HCT116 (cell line): ENCODE measurements at regions of chr18 and their contacts with region 1.

Region 1: DNA sequence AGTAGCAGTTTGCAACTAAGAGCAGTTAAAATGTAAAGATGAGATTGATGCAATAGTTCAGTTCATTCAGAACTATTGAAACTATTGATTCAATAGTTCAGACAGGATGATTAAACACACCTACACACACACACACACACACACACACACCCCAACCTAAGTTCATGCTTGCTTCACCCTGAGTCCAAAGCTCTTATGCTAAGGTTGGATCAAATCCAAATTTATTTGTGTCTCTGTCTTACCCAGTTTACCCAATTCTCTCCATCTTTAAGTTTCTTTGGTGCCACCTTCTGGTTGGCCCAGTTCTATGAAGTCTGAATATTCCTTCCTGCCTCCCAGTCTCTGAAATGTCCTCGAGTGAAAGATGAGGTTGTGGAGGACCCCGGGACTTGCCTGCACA is 5.1 kb downstream of the SERPINB8 start:
- DNase-seq: peak; percentile 21
- ATAC-seq: no peak
- H3K4me3 ChIP-seq: no peak overlapping the region
- H3K27ac ChIP-seq: no peak overlapping the region
- H3K4me1 ChIP-seq: peaks cover 6 to 15% of the 10 kb centered on the region in 2 experiments; a peak in 3 of 4 replicates
- H3K27me3 ChIP-seq: no peaks in the 10 kb centered on the region
- CTCF ChIP-seq: peak in 2 of 3 experiments; percentile 39 to 47; a peak in 4 of 6 replicates
- POLR2A ChIP-seq: no peak
- RAD21 ChIP-seq: peak; percentile 43

Region 2: GRCh38 chr18:63963615-63964256 is 11.3 kb before region 1 on chr18:
- CTCF ChIA-PET with region 1: interaction called, 10 read pairs
- POLR2A ChIA-PET with region 1: interaction called, 5 read pairs
- RAD21 ChIA-PET with region 1: no interaction called
- intact Hi-C with region 1: no loop called
- DNase-seq: peak; percentile 56
- ATAC-seq: peak; percentile 90
- H3K4me3 ChIP-seq: no peak overlapping the region
- H3K27ac ChIP-seq: no peak overlapping the region
- H3K4me1 ChIP-seq: no peaks in the 10 kb centered on the region
- H3K27me3 ChIP-seq: no peaks in the 10 kb centered on the region
- CTCF ChIP-seq: peak; percentile 37 to 89 (median 82); a peak in 5 of 6 replicates
- POLR2A ChIP-seq: no peak
- RAD21 ChIP-seq: peak; percentile 54

Region 3: GRCh38 chr18:64037812-64038414 is 62.9 kb after region 1 on chr18:
- CTCF ChIA-PET with region 1: no interaction called
- POLR2A ChIA-PET with region 1: no interaction called
- RAD21 ChIA-PET with region 1: no interaction called
- intact Hi-C with region 1: no loop called
- DNase-seq: peak; percentile 36
- ATAC-seq: peak; percentile 67
- H3K4me3 ChIP-seq: no peak overlapping the region
- H3K27ac ChIP-seq: no peak overlapping the region
- H3K4me1 ChIP-seq: no peaks in the 10 kb centered on the region
- H3K27me3 ChIP-seq: no peaks in the 10 kb centered on the region
- CTCF ChIP-seq: peak; percentile 43 to 61 (median 43); a peak in 4 of 6 replicates
- POLR2A ChIP-seq: no peak
- RAD21 ChIP-seq: peak; percentile 46